Activated CD8-positive, alpha-beta T cell treated with anti-CD3 and anti-CD28 coated beads for 36 hours (primary cell): ENCODE measurements at regions of chr14 and their contacts with region 1.

Region 1: DNA sequence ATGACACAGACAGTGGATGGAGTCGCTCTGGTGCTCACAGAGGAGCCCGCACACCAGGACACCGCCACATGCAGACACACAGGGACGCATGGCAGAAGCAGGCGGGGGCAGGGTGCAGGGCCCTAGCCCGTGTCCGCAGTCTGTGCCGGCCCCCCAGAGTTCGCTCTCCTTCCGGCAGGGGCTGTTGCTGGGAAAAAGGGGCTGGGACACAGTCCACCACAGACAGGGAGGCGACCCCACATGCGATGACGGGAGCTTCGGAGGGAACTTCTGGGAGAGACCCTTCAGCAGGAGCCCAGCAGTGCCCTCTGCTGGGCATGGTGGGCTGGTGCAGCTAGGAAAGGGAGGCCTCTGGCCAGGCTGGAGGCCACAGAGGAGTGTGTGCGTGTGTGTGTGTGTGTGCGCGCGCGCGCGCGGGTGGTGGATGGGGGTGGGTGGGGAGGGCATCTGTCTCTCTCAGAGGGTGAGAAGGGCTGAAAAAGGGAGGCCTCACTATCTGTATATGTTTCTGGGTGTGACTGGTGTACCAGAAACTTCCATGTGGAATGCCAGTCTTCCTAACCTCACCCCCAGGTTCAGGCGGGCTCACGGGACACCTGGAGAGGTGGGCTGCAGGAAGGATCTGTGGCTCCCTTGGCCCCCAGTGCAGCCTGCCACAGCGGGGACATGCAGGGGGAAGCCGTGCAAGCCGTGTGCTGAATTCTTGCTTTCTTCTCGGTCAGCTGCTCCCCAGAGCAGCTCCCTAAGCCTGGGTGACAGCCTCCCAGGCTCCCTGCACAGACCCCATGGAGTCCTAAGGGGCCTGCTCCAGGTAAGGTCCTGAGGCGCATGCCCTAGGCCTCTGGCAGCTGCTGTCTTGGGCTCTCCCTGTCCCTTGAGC is 60.7 kb downstream of the PLEKHG3 start:
- DNase-seq: peak; percentile 71
- ATAC-seq: peak; percentile 93
- H3K4me3 Mint-ChIP-seq: peak overlapping the region; percentile 51
- H3K27ac Mint-ChIP-seq: no peak overlapping the region
- H3K4me1 Mint-ChIP-seq: peaks cover 7% of the 10 kb centered on the region
- H3K27me3 Mint-ChIP-seq: peaks cover 7% of the 10 kb centered on the region
- CTCF ChIP-seq: peak; percentile 82

Region 2: DNA sequence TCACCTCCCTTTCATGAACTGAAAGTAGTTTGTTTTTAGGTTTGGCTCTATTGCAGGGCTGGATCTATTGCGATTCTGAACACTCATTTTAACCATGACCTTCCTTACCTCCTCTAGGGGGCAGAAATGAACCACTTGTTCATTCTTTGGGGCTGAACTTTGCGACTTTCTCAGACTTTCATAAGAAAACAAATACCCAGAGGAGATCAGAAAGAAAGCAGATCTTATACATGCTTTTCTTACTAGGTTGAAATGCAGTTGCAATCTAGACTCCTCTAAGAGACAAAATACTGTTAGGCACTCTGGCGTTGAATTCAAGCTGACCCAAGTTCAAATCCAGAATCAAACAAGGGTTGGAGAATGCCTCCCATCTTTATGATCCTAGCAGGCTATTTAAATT is 93.3 kb before region 1 on chr14:
- CTCF ChIA-PET with region 1: interaction called, 26 read pairs
- POLR2A ChIA-PET with region 1: interaction called, 3 read pairs
- intact Hi-C with region 1: loop called (anchors 5 kb)
- DNase-seq: no peak
- ATAC-seq: peak; percentile 77
- H3K4me3 Mint-ChIP-seq: no peak overlapping the region
- H3K27ac Mint-ChIP-seq: no peak overlapping the region
- H3K4me1 Mint-ChIP-seq: peaks cover 7% of the 10 kb centered on the region
- H3K27me3 Mint-ChIP-seq: no peaks in the 10 kb centered on the region
- CTCF ChIP-seq: peak; percentile 56

Region 3: DNA sequence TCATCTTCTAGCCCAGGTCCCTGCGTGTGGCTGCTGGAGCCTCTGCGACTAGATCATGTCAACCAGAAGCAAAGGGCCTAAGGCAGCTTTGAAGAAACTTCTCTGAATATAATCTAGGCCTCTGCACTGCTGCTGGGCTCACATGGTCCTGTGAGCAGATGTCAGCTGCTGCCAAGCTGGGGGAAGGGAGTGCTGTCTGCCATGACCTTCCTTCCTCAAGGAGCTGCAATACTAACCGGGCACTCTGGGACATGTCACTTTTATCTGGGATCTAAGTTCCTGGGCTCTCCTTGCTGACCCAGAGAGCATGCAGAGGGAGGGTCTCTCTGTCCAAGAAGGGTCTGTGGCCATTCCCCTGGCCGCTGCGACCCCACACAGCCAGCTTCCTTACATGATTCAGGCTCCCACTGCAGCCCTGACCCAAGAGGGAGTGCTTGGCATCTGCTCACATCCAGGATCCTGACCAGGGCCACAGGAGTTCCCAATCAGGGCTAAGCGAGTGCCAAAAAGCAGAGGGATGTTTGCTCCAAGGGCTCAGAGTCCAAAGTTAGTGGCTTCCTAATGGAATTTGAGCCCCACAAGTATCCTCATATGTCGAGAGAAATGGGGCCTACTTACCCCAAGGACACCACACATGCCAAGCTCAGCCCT is 13.3 kb after region 1 on chr14:
- CTCF ChIA-PET with region 1: interaction called, 10 read pairs
- POLR2A ChIA-PET with region 1: no interaction called
- intact Hi-C with region 1: no loop called
- DNase-seq: no peak
- ATAC-seq: no peak
- H3K4me3 Mint-ChIP-seq: no peak overlapping the region
- H3K27ac Mint-ChIP-seq: no peak overlapping the region
- H3K4me1 Mint-ChIP-seq: no peaks in the 10 kb centered on the region
- H3K27me3 Mint-ChIP-seq: no peaks in the 10 kb centered on the region
- CTCF ChIP-seq: no peak